Adrenal gland (tissue), 19 donors: ENCODE measurements at regions of chr11 and their contacts with region 1.

Region 1: GRCh38 chr11:33257897-33258630 is 883 bp downstream of the HIPK3 start:
- DNase-seq: peak; percentile 83 to 89 (median 87)
- H3K4me3 ChIP-seq: peak overlapping the region; percentile 79 to 97 (median 82)
- H3K27ac ChIP-seq: peak overlapping the region; percentile 91 to 100 (median 100)
- H3K4me1 ChIP-seq: peaks cover 30 to 44% of the 10 kb centered on the region in 2 donors
- H3K27me3 ChIP-seq: no peaks in the 10 kb centered on the region
- CTCF ChIP-seq: peak; percentile 22 to 56 (median 42)
- POLR2A ChIP-seq: peak; percentile 57 to 79

Region 2: DNA sequence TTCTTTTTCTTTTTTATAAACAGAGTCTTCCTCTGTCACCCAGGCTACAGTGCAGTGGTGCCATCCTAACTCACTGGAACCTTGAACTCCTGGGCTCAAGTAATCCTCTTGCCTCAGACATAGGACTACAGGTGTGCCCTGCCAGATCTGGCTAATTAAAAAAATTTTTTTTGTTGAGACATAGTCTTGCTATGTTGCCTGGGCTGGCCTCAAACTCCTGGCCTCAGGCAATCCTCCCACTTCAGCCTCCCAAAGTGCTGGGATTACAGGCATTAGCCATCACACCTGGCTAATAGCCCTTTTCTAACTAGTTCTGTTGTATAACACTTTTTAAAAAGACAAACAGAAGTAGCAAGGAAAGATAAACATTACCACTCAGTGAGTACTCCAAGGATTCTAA is 154.2 kb before region 1 on chr11:
- intact Hi-C with region 1: no loop called
- DNase-seq: no peak
- H3K4me3 ChIP-seq: no peak overlapping the region
- H3K27ac ChIP-seq: no peak overlapping the region
- H3K4me1 ChIP-seq: no peaks in the 10 kb centered on the region
- H3K27me3 ChIP-seq: no peaks in the 10 kb centered on the region
- CTCF ChIP-seq: no peak
- POLR2A ChIP-seq: no peak

Region 3: DNA sequence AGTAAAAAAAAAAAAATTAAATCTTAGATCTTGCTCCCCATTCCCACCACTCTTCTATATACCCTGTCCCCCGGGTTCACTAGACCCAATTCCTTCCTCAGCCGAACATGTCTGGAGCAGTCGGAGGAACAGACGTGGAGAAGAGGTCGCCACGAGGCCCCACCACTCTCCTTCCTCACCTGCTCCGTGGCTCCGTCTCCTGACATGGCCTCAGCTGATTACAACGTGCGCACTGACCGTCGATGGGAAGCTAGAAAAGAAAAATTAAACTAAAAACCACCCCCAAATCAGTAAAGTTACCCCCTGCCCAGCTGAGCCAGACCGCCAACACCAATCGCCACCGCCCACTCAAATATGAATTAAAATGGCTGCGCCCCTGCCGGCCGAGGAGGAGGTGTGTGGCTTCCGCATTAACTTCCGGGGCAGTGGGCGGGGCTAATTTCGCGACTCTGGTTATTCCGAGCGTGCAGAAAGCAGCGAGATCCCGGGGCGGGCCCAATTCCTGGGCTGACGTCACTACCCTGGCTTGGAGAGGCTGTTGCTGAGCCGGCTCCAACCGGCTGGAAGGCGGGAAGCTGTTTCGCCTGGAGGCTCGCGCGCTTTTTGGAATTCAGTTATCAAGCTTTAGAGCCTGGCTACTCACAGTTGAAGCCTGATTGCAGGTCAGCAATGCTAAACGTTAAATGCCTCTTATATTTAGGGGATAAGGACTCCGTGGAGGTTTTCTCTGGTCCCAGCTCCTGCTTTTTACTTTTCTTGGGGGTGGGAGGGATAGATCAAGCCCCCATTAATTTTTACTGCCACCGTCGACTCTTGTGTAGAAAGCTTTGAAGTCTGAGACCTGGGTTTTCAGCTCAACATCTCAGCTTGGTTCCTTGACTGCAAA is 96.7 kb before region 1 on chr11 and contains the start of gene CSTF3:
- intact Hi-C with region 1: loop called (anchors 10 kb)
- DNase-seq: peak; percentile 100
- H3K4me3 ChIP-seq: peak within 1 kb of the TSS; percentile 57 to 82 (median 60)
- H3K27ac ChIP-seq: peak within 1 kb of the TSS; percentile 28 to 84 (median 56)
- H3K4me1 ChIP-seq: peaks cover 5 to 38% of the 10 kb centered on the region in 2 donors
- H3K27me3 ChIP-seq: no peaks in the 10 kb centered on the region
- CTCF ChIP-seq: peak; percentile 44 to 91 (median 69)
- POLR2A ChIP-seq: peak in 1 of 2 donors; percentile 77
- total RNA-seq, gene CSTF3: 6.9 to 25.9 (median 17.6) TPM

Region 4: GRCh38 chr11:33324302-33324985 is 66.4 kb after region 1 on chr11:
- intact Hi-C with region 1: loop called (anchors 5 to 10 kb)
- DNase-seq: no peak
- H3K4me3 ChIP-seq: no peak overlapping the region
- H3K27ac ChIP-seq: no peak overlapping the region
- H3K4me1 ChIP-seq: peaks cover 7 to 39% of the 10 kb centered on the region in 2 donors
- H3K27me3 ChIP-seq: no peaks in the 10 kb centered on the region
- CTCF ChIP-seq: no peak
- POLR2A ChIP-seq: no peak

Region 5: DNA sequence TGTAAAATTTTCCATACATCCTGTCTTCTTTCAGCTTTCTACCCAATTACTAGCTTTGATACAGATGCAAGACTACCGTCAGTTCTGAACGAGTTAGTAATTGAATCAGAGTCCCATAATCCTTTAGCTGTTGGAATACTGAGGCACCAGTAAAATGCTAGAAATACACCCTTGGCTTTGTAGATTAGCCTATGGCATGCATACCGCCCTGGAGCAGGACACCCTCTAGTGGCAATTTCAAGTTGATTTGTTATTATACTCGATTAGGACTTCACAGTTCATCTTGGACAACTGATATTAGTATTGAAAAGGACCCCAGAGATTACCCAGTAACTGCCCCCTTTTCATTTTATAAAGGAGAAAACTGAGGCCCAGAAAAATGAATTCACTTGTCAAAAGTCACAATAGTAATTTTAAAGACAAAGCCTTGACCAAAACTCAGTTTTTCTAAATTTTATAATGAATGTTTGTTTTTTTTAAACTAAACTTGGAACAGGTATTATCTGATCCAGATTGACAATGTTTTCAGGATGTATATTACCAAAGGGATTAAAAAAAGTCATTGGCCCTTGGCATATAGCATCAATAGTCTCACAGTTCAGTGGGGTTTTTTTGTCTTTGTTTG is 71.8 kb after region 1 on chr11:
- intact Hi-C with region 1: loop called in 1 of 2 experiments (anchors 10 kb)
- DNase-seq: peak; percentile 45 to 79 (median 57)
- H3K4me3 ChIP-seq: no peak overlapping the region
- H3K27ac ChIP-seq: no peak overlapping the region
- H3K4me1 ChIP-seq: peaks cover 0 to 10% of the 10 kb centered on the region in 2 donors
- H3K27me3 ChIP-seq: no peaks in the 10 kb centered on the region
- CTCF ChIP-seq: peak; percentile 54 to 71 (median 68)
- POLR2A ChIP-seq: no peak